BJ (cell line): ENCODE measurements at regions of chr15 and their contacts with region 1.

Region 1: DNA sequence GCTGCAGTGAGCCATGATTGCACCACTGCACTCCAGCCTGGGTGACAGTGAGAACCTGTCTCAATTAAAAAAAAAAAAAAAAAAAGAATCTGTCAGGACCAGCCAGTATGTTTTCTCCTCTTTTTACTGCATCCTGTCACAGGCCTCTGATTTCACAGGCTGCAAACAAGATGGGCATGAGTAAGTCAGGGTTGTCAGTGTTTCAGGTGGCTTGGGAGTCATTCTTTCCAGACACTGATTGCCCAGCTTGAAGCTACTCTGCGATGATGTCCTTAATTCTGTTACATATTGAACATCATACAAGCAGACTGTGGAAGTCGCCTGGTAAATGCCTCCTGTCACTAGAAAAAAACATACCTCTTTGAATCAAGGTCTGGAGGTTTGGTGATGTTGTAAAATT is 18.8 kb downstream of the DIS3L start:
- DNase-seq: no peak
- H3K4me3 ChIP-seq: no peak overlapping the region
- H3K27me3 ChIP-seq: no peaks in the 10 kb centered on the region
- CTCF ChIP-seq: no peak

Region 2: DNA sequence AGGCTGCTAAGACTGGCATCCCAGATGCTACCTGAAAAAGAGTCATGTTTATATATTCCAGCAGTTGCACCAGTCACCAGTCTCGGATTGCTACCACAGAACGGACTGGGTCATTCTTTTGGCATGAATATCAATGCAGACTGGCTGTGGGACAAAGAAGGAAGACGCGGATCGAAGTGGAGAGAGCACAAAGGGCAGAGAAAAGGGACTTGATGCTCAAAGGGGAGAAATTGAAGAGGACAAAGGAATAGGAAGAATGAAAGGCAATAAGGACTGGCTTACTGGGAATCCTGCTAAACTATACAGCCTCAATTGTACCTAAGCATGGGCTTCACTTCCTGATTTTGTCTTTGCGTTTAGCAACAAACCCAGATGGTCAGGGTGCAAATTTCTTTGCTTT is 34.1 kb before region 1 on chr15:
- CTCF ChIA-PET with region 1: no interaction called
- POLR2A ChIA-PET with region 1: no interaction called
- DNase-seq: no peak
- H3K4me3 ChIP-seq: no peak overlapping the region
- H3K27me3 ChIP-seq: peaks cover 4% of the 10 kb centered on the region
- CTCF ChIP-seq: no peak

Region 3: GRCh38 chr15:66298803-66299251 is 13.3 kb before region 1 on chr15:
- CTCF ChIA-PET with region 1: interaction called, 3 read pairs
- POLR2A ChIA-PET with region 1: interaction called, 12 read pairs
- DNase-seq: no peak
- H3K4me3 ChIP-seq: no peak overlapping the region
- H3K27me3 ChIP-seq: no peaks in the 10 kb centered on the region
- CTCF ChIP-seq: no peak

Region 4: GRCh38 chr15:66401130-66402021 is 89.2 kb after region 1 on chr15:
- CTCF ChIA-PET with region 1: no interaction called
- POLR2A ChIA-PET with region 1: no interaction called
- DNase-seq: no peak
- H3K4me3 ChIP-seq: no peak overlapping the region
- H3K27me3 ChIP-seq: no peaks in the 10 kb centered on the region
- CTCF ChIP-seq: no peak